ENCODE measurements at regions of chr12 and their contacts with region 1.

Region 1: GRCh38 chr12:6752921-6753771 is at the start of gene MLF2:
- DNase-seq: peak; percentile 93 to 98 (median 97)
- ATAC-seq: peak; percentile 87
- H3K4me3 ChIP-seq: peak within 1 kb of the TSS; percentile 92
- H3K4me3 Mint-ChIP-seq: peak within 1 kb of the TSS; percentile 96
- H3K27ac ChIP-seq: peak within 1 kb of the TSS; percentile 83 to 99
- H3K27ac Mint-ChIP-seq: peak within 1 kb of the TSS; percentile 98
- H3K4me1 ChIP-seq: peaks cover 17% of the 10 kb centered on the region
- H3K4me1 Mint-ChIP-seq: peaks cover 21% of the 10 kb centered on the region
- H3K27me3 ChIP-seq: no peaks in the 10 kb centered on the region
- H3K27me3 Mint-ChIP-seq: peaks cover 2% of the 10 kb centered on the region
- CTCF ChIP-seq: peak; percentile 83
- total RNA-seq, gene MLF2: 106 to 111 TPM

Region 2: DNA sequence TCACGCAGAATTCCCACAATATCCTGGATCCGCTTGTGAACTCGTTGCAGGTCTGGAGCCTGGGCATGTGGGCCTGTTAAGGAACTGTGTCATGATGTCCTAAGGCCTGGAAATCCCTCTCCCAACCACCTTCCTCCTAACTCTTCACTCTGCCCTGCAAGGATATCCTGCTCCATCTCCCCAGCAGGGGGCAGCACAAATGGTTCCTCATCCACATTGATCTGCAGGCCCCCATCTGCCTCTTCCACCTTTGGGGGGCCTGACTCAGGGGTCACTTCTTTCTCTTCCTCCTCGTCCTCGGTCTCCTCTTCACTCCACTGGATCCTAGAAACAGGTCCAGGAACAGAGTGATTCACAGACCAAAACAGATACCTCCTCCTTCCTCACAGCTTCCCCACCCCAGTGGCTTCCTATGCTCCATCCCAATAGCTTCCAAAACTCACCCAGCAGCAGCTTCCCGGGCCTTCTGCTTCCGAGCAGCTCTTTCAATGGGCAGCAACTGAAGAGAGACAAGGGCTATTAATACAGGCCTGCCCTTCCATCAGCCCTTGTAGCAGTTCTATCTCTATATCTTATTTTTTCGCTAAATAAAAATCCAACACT is 189.6 kb before region 1 on chr12:
- CTCF ChIA-PET with region 1: interaction called, 8 read pairs
- POLR2A ChIA-PET with region 1: no interaction called
- intact Hi-C with region 1: loop called in 1 of 2 experiments (anchors 1 kb)
- DNase-seq: peak; percentile 39 to 82 (median 73)
- ATAC-seq: peak; percentile 27
- H3K4me3 ChIP-seq: no peak overlapping the region
- H3K4me3 Mint-ChIP-seq: no peak overlapping the region
- H3K27ac ChIP-seq: no peak overlapping the region
- H3K27ac Mint-ChIP-seq: peak overlapping the region; percentile 78
- H3K4me1 ChIP-seq: peaks cover 18% of the 10 kb centered on the region
- H3K4me1 Mint-ChIP-seq: peaks cover 42% of the 10 kb centered on the region
- H3K27me3 ChIP-seq: no peaks in the 10 kb centered on the region
- H3K27me3 Mint-ChIP-seq: no peaks in the 10 kb centered on the region
- CTCF ChIP-seq: peak; percentile 71

Region 3: GRCh38 chr12:6688999-6689882 is 63.9 kb before region 1 on chr12 and contains the start of gene ZNF384:
- CTCF ChIA-PET with region 1: no interaction called
- POLR2A ChIA-PET with region 1: interaction called, 18 read pairs
- intact Hi-C with region 1: loop called (anchors 1 kb)
- DNase-seq: peak; percentile 89 to 99 (median 96)
- ATAC-seq: peak; percentile 78
- H3K4me3 ChIP-seq: peak within 1 kb of the TSS; percentile 60 to 77
- H3K4me3 Mint-ChIP-seq: peak within 1 kb of the TSS; percentile 94
- H3K27ac ChIP-seq: peak within 1 kb of the TSS; percentile 89 to 91
- H3K27ac Mint-ChIP-seq: peak within 1 kb of the TSS; percentile 98
- H3K4me1 ChIP-seq: peaks cover 33% of the 10 kb centered on the region
- H3K4me1 Mint-ChIP-seq: peaks cover 55% of the 10 kb centered on the region
- H3K27me3 ChIP-seq: no peaks in the 10 kb centered on the region
- H3K27me3 Mint-ChIP-seq: no peaks in the 10 kb centered on the region
- CTCF ChIP-seq: no peak
- total RNA-seq, gene ZNF384: 61.8 to 63.8 TPM

Region 4: DNA sequence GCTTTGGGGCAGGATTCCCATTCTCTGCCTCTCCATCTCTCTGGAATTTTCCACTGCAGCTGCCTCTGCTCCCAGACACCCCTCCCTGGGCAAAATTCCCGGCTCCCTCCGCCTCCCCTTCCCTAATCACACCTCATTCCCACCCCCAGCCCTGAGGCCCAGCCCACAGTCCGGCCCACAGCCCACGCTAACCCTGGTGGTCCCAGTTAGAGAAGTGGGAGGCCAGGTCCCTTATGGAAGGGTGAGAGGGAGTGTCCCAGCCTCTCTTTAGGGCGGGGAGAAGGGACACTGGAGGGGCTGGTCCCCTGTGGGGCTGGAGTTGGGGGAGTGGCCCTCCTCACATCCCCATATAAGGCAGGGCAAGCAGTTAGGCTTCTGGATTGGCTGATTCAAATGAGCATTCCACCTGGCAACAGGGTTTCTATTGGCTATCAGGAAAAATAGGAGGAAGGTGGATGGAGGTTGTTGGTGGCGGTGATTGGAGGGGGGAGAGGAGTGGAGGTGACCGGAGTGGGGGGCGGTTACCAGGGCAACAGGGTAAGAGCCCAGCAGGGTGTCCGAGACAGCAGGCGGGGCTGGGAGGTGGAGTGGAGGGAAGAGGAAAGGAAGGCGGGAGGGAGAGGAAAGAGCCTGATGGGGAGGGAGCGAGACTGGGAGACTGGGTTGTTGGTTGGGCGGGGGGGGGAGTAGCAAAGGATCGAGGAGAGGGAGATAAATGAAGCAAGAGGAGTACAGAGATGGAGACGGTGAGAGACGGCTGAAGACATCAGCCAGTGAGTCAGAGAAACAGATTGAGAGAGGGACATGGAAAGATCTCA is 11.1 kb after region 1 on chr12:
- CTCF ChIA-PET with region 1: interaction called, 403 read pairs
- POLR2A ChIA-PET with region 1: interaction called, 31 read pairs
- intact Hi-C with region 1: loop called (anchors 1 kb)
- DNase-seq: peak in 6 of 9 experiments; percentile 17 to 86 (median 54)
- ATAC-seq: peak; percentile 84
- H3K4me3 ChIP-seq: no peak overlapping the region
- H3K4me3 Mint-ChIP-seq: peak overlapping the region; percentile 13
- H3K27ac ChIP-seq: no peak overlapping the region
- H3K27ac Mint-ChIP-seq: no peak overlapping the region
- H3K4me1 ChIP-seq: peaks cover 22% of the 10 kb centered on the region
- H3K4me1 Mint-ChIP-seq: peaks cover 31% of the 10 kb centered on the region
- H3K27me3 ChIP-seq: peaks cover 7 to 13% of the 10 kb centered on the region in 2 experiments
- H3K27me3 Mint-ChIP-seq: peaks cover 38% of the 10 kb centered on the region
- CTCF ChIP-seq: no peak

Region 5: GRCh38 chr12:6792522-6793201 is 39.5 kb after region 1 on chr12:
- CTCF ChIA-PET with region 1: interaction called, 403 read pairs
- POLR2A ChIA-PET with region 1: no interaction called
- intact Hi-C with region 1: no loop called
- DNase-seq: peak in 8 of 9 experiments; percentile 18 to 70 (median 43)
- ATAC-seq: peak; percentile 93
- H3K4me3 ChIP-seq: peak overlapping the region in 1 of 2 experiments; percentile 25
- H3K4me3 Mint-ChIP-seq: peak overlapping the region; percentile 42
- H3K27ac ChIP-seq: no peak overlapping the region
- H3K27ac Mint-ChIP-seq: peak overlapping the region; percentile 22
- H3K4me1 ChIP-seq: peaks cover 27% of the 10 kb centered on the region
- H3K4me1 Mint-ChIP-seq: peaks cover 33% of the 10 kb centered on the region
- H3K27me3 ChIP-seq: no peaks in the 10 kb centered on the region
- H3K27me3 Mint-ChIP-seq: peaks cover 4% of the 10 kb centered on the region
- CTCF ChIP-seq: no peak

Region 6: GRCh38 chr12:6873094-6874014 is 120.2 kb after region 1 on chr12 and contains the start of gene SPSB2:
- CTCF ChIA-PET with region 1: interaction called, 4 read pairs
- POLR2A ChIA-PET with region 1: interaction called, 6 read pairs
- intact Hi-C with region 1: loop called (anchors 1 kb)
- DNase-seq: peak; percentile 96 to 100 (median 99)
- ATAC-seq: peak; percentile 90
- H3K4me3 ChIP-seq: peak within 1 kb of the TSS; percentile 89 to 99
- H3K4me3 Mint-ChIP-seq: peak within 1 kb of the TSS; percentile 90
- H3K27ac ChIP-seq: peak within 1 kb of the TSS; percentile 77 to 83
- H3K27ac Mint-ChIP-seq: peak within 1 kb of the TSS; percentile 90
- H3K4me1 ChIP-seq: peaks cover 44% of the 10 kb centered on the region
- H3K4me1 Mint-ChIP-seq: peaks cover 47% of the 10 kb centered on the region
- H3K27me3 ChIP-seq: no peaks in the 10 kb centered on the region
- H3K27me3 Mint-ChIP-seq: no peaks in the 10 kb centered on the region
- CTCF ChIP-seq: no peak
- total RNA-seq, gene SPSB2: 2.6 to 3.0 TPM

Region 7: GRCh38 chr12:6950811-6951540 is 197.8 kb after region 1 on chr12 and contains the start of gene PTPN6:
- CTCF ChIA-PET with region 1: no interaction called
- POLR2A ChIA-PET with region 1: no interaction called
- intact Hi-C with region 1: no loop called
- DNase-seq: peak in 8 of 9 experiments; percentile 52 to 84 (median 65)
- ATAC-seq: peak; percentile 22
- H3K4me3 ChIP-seq: peak within 1 kb of the TSS; percentile 93 to 95
- H3K4me3 Mint-ChIP-seq: peak within 1 kb of the TSS; percentile 99
- H3K27ac ChIP-seq: peak within 1 kb of the TSS; percentile 72 to 93
- H3K27ac Mint-ChIP-seq: peak within 1 kb of the TSS; percentile 100
- H3K4me1 ChIP-seq: peaks cover 70% of the 10 kb centered on the region
- H3K4me1 Mint-ChIP-seq: peaks cover 82% of the 10 kb centered on the region
- H3K27me3 ChIP-seq: no peaks in the 10 kb centered on the region
- H3K27me3 Mint-ChIP-seq: no peaks in the 10 kb centered on the region
- CTCF ChIP-seq: no peak
- total RNA-seq, gene PTPN6: 63.2 to 63.9 TPM

Region 8: GRCh38 chr12:7092229-7092985 is 339.3 kb after region 1 on chr12 and contains the start of gene C1R:
- CTCF ChIA-PET with region 1: no interaction called
- POLR2A ChIA-PET with region 1: no interaction called
- intact Hi-C with region 1: loop called in 1 of 2 experiments (anchors 1 kb)
- DNase-seq: peak; percentile 36 to 81 (median 72)
- ATAC-seq: peak; percentile 89
- H3K4me3 ChIP-seq: peak within 1 kb of the TSS; percentile 49 to 66
- H3K4me3 Mint-ChIP-seq: peak within 1 kb of the TSS; percentile 88
- H3K27ac ChIP-seq: no peak within 1 kb of the TSS
- H3K27ac Mint-ChIP-seq: peak within 1 kb of the TSS; percentile 29
- H3K4me1 ChIP-seq: peaks cover 14% of the 10 kb centered on the region
- H3K4me1 Mint-ChIP-seq: peaks cover 11% of the 10 kb centered on the region
- H3K27me3 ChIP-seq: no peaks in the 10 kb centered on the region
- H3K27me3 Mint-ChIP-seq: no peaks in the 10 kb centered on the region
- CTCF ChIP-seq: peak; percentile 82
- total RNA-seq, gene C1R: 3.8 TPM

Region 9: GRCh38 chr12:7229741-7230140 is 476.6 kb after region 1 on chr12:
- CTCF ChIA-PET with region 1: no interaction called
- POLR2A ChIA-PET with region 1: no interaction called
- intact Hi-C with region 1: no loop called
- DNase-seq: no peak
- ATAC-seq: no peak
- H3K4me3 ChIP-seq: no peak overlapping the region
- H3K4me3 Mint-ChIP-seq: no peak overlapping the region
- H3K27ac ChIP-seq: no peak overlapping the region
- H3K27ac Mint-ChIP-seq: no peak overlapping the region
- H3K4me1 ChIP-seq: no peaks in the 10 kb centered on the region
- H3K4me1 Mint-ChIP-seq: no peaks in the 10 kb centered on the region
- H3K27me3 ChIP-seq: no peaks in the 10 kb centered on the region
- H3K27me3 Mint-ChIP-seq: peaks cover 24% of the 10 kb centered on the region
- CTCF ChIP-seq: no peak